Calu3 (cell line): ENCODE measurements at regions of chr2 and their contacts with region 1.

Region 1: GRCh38 chr2:26330113-26330549 is 15.8 kb upstream of the SELENOI start:
- DNase-seq: peak; percentile 91
- H3K4me3 Mint-ChIP-seq: no peak overlapping the region
- H3K27ac Mint-ChIP-seq: no peak overlapping the region
- H3K4me1 Mint-ChIP-seq: peaks cover 10% of the 10 kb centered on the region
- H3K27me3 Mint-ChIP-seq: no peaks in the 10 kb centered on the region
- CTCF ChIP-seq: peak; percentile 77

Region 2: DNA sequence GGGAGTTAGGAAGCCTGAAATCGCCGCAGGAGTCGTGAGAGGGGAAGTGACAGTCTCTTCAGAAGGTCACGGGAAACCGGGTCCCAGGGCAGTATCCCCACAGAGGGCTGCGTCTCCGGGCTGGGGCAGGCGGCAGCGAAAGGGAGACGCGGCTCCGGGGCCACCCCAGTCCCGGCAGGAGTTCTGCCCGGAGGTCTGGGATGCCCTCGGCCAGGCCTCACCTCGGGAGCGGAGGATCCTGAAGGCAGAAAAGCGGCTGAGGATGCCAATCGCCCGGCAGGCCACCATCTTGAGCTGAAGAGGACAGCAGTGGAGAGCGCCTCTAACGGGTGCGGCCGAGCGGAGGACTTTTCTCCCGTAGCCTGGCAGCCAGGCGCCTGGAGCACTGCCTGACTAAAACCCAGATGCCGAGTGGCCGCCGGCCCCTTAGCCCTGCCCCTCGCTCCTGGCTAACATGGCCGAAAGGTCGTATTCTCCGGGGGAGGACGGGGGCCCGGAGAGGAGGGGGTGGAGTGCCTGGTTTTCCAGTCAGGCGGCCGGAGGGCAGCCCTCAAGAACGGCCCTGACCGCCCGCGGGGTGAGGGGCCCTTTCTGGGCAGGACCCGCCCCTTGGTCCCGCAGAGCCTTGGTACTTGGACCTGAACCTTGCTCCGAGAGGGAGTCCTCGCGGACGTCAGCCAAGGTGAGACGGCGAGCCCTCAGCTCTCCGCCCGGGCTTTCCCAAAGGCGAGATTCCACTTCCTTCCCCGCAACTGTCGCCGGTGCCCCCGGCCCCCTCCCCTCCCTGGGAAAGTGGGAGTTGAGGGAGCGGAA is 85.6 kb before region 1 on chr2 and contains the starts of genes HADHA and HADHB:
- CTCF ChIA-PET with region 1: interaction called, 3 read pairs
- intact Hi-C with region 1: loop called (anchors 5 kb)
- DNase-seq: peak; percentile 92
- H3K4me3 Mint-ChIP-seq: peak within 1 kb of the TSS; percentile 98
- H3K27ac Mint-ChIP-seq: peak within 1 kb of the TSS; percentile 95
- H3K4me1 Mint-ChIP-seq: peaks cover 29% of the 10 kb centered on the region
- H3K27me3 Mint-ChIP-seq: no peaks in the 10 kb centered on the region
- CTCF ChIP-seq: no peak
- total RNA-seq, gene HADHA: 127 TPM in 2 replicates
- total RNA-seq, gene HADHB: 78.3 and 84.4 TPM in 2 replicates

Region 3: DNA sequence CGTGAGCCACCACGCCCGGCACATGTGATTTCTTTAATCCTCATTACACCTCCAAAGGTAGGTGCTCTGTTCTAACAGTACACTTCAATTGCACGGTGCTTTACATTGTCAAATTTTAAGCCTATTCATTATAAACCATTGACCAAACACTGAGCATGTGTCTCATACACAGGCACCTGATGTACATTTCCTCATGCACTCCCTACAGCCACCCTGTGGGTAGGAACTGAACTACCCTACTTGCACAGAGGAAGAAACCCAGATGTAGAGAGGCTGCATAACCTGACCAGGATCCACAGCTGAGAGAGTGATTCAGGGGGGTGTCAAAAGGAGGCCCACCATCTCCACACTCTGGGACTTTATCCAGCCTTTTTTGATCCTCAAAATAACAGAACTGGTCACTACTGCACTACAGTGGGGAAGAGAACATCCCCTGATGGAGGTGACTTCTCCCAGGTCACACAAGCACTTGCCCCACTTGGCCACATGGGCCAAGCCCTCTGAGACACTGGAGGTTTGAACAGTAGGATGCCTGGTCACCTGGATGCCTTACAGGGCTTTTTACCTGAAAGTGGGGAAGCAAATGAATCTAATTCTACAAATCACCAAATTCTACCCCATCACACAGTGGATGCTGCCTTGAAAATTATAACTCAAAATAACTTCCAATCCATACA is 510.9 kb after region 1 on chr2:
- CTCF ChIA-PET with region 1: no interaction called
- intact Hi-C with region 1: no loop called
- DNase-seq: no peak
- H3K4me3 Mint-ChIP-seq: no peak overlapping the region
- H3K27ac Mint-ChIP-seq: no peak overlapping the region
- H3K4me1 Mint-ChIP-seq: no peaks in the 10 kb centered on the region
- H3K27me3 Mint-ChIP-seq: peaks cover 77% of the 10 kb centered on the region
- CTCF ChIP-seq: no peak